Transverse colon (tissue), 4 donors: ENCODE measurements at regions of chr1 and their contacts with region 1.

Region 1: GRCh38 chr1:64624218-64624713 is 120.6 kb upstream of the RAVER2 start:
- DNase-seq: no peak
- H3K4me3 ChIP-seq: no peak overlapping the region
- H3K27ac ChIP-seq: no peak overlapping the region
- H3K4me1 ChIP-seq: peaks cover 0 to 8% (median 4%) of the 10 kb centered on the region in 4 donors
- H3K27me3 ChIP-seq: no peaks in the 10 kb centered on the region
- CTCF ChIP-seq: no peak
- EP300 ChIP-seq: no peak
- POLR2A ChIP-seq: no peak

Region 2: GRCh38 chr1:64598100-64598571 is 26.1 kb before region 1 on chr1:
- in situ Hi-C with region 1: no loop called
- intact Hi-C with region 1: no loop called
- DNase-seq: no peak
- H3K4me3 ChIP-seq: no peak overlapping the region
- H3K27ac ChIP-seq: no peak overlapping the region
- H3K4me1 ChIP-seq: peaks cover 0 to 8% (median 2%) of the 10 kb centered on the region in 4 donors
- H3K27me3 ChIP-seq: no peaks in the 10 kb centered on the region
- CTCF ChIP-seq: no peak
- EP300 ChIP-seq: no peak
- POLR2A ChIP-seq: no peak

Region 3: DNA sequence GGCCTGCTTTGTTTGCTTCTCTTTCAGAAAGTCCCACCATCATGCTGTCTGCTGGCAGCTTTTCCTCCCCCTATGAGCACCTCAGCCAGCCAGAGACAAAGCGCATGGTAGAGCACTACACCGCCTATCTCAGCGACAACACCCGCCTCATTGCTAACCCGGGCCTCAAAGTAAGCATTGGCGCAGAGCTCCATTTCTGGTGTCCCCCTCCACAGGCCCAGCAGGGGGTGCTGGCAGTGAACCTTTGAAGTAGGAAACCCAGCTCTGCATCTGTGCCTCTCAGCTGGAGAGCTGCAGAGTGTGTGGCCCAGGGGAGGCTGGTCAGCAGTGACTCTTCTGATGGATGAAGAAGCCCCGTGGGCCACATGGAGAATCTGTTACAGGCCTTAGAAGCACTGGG is 39.4 kb after region 1 on chr1:
- in situ Hi-C with region 1: no loop called
- intact Hi-C with region 1: loop called (anchors 1 kb)
- DNase-seq: no peak
- H3K4me3 ChIP-seq: no peak overlapping the region
- H3K27ac ChIP-seq: no peak overlapping the region
- H3K4me1 ChIP-seq: no peaks in the 10 kb centered on the region
- H3K27me3 ChIP-seq: no peaks in the 10 kb centered on the region
- CTCF ChIP-seq: no peak
- EP300 ChIP-seq: no peak
- POLR2A ChIP-seq: no peak

Region 4: DNA sequence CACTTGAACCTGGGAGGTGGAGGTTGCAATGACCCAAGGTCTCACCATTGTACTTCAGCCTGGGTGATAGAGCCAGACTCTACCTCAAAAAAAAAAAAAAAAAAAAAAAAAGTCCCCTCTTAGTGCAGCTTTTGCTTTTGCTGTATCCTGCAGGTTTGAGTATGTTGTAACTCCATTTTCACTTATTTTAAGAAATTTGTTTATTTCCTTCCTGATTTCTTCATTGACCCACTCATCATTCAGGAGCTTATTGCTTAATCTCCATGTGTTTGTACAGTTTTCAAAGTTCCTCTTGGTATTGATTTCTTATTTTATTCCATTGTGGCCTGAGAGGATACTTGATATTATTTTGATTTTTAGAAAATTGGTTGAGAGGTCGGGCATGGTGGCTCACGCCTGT is 472.8 kb after region 1 on chr1:
- in situ Hi-C with region 1: no loop called
- intact Hi-C with region 1: loop called (anchors 5 kb)
- DNase-seq: no peak
- H3K4me3 ChIP-seq: no peak overlapping the region
- H3K27ac ChIP-seq: no peak overlapping the region
- H3K4me1 ChIP-seq: no peaks in the 10 kb centered on the region
- H3K27me3 ChIP-seq: no peaks in the 10 kb centered on the region
- CTCF ChIP-seq: no peak
- EP300 ChIP-seq: no peak
- POLR2A ChIP-seq: no peak